ENCODE measurements at regions of chr3 and their contacts with region 1.

Region 1: DNA sequence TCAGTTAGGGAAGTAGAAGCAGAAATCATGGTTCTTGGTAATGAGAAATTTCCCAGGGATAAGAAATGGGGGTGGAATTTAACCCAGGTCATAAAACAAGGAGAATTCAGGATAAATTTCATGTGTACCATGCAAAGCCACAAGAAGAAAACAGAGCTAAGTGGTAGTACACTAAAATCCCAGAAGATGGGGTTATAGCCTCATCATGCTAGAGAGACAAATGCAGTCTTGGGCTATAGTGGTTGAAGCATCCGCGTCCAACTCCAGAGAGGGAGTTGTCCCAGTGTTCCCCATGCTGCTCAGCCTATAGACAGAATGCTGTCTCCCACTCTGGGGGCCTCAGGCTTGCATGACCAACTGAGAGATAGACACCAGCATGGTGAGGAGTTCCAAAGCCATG is 36.2 kb upstream of the CLRN1 start:
- DNase-seq: no peak
- H3K4me3 ChIP-seq: no peak overlapping the region
- CTCF ChIP-seq: peak; percentile 42

Region 2: GRCh38 chr3:150878996-150879575 is 129.6 kb before region 1 on chr3:
- CTCF ChIA-PET with region 1: no interaction called
- POLR2A ChIA-PET with region 1: no interaction called
- DNase-seq: no peak
- H3K4me3 ChIP-seq: no peak overlapping the region
- CTCF ChIP-seq: no peak

Region 3: GRCh38 chr3:151086484-151087456 is 78.1 kb after region 1 on chr3:
- CTCF ChIA-PET with region 1: interaction called, 25 read pairs
- POLR2A ChIA-PET with region 1: no interaction called
- DNase-seq: peak; percentile 34
- H3K4me3 ChIP-seq: peak overlapping the region; percentile 57
- CTCF ChIP-seq: peak; percentile 81

Region 4: GRCh38 chr3:151135541-151136337 is 127.0 kb after region 1 on chr3:
- CTCF ChIA-PET with region 1: interaction called, 17 read pairs
- POLR2A ChIA-PET with region 1: no interaction called
- DNase-seq: no peak
- H3K4me3 ChIP-seq: no peak overlapping the region
- CTCF ChIP-seq: no peak

Region 5: GRCh38 chr3:151156618-151157216 is 148.0 kb after region 1 on chr3:
- CTCF ChIA-PET with region 1: interaction called, 32 read pairs
- POLR2A ChIA-PET with region 1: no interaction called
- DNase-seq: no peak
- H3K4me3 ChIP-seq: no peak overlapping the region
- CTCF ChIP-seq: peak; percentile 55

Measured in AG04449 (cell line).